GM12878 (cell line): ENCODE measurements at regions of chr5 and their contacts with region 1.

Region 1: DNA sequence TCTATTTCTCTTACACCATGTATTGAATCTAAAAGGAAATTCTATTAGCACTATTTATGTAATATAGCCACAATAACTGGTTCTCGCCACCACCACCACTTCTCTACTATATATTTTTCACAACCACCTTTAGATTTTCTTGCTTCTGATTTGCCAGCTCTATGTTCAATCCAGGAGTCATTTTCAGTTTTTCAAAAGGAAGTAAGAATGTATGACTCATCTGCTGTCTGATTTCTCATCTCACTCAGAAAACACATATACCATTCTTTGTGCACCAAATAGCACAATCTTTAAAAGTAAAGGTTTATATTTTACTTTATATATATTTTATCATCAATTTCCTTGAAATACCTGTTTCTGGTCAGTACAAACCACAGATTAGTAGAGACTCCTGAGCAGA is 1127.5 kb downstream of the TAF11L14 start:
- DNase-seq: no peak
- ATAC-seq: peak; percentile 89
- H3K4me3 ChIP-seq: no peak overlapping the region
- H3K27ac ChIP-seq: no peak overlapping the region
- H3K4me1 ChIP-seq: no peaks in the 10 kb centered on the region
- H3K27me3 ChIP-seq: no peaks in the 10 kb centered on the region
- CTCF ChIP-seq: no peak
- EP300 ChIP-seq: no peak
- POLR2A ChIP-seq: no peak
- RAD21 ChIP-seq: no peak

Region 2: DNA sequence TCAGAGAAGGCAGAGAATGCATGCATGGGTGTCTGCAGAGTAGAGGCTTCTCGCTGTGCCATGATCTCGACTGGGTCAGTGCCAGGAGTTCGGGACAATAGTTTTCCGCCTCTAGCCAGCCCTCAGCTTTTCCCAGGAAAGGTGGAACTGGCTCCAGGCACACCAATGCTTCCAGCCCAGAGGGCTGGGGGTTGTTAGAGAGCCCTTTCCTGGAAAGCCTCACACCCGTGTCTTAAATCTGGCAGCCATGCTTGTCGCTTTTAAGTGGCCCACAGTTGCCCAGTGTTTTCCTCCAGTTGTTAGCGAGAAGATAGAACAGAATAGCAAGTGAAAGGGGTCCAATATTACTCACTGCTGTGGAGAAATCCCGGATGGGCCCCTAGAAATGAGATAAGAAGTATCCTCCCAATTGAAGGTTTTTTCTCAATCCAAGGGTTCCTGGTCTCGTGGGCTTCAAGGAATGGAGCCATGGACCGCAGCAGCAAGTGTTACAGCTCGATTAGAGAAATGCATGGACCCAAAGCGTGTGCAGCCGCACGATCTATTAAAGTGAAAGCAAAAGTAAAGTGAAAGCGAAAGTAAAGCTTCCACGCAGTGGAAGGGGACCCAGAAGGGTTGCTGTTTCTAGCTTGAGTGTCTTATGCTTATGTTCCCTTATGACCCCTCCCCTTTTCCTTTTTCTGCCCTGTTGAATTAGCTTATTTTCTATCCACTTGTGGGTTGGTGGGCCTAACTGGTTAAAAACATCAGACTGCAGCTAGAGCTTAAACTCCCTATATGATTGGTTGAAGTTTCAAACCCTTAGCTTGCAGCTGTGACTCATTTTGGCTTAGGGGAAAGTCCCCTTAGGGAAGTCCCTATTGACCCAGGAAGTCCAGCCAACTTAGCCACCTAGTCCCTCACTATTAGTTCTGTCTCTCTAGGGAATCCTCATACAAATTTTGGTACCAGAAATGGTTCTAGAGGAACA is 15.9 kb before region 1 on chr5:
- CTCF ChIA-PET with region 1: interaction called, 4 read pairs
- POLR2A ChIA-PET with region 1: interaction called, 6 read pairs
- RAD21 ChIA-PET with region 1: interaction called, 4 read pairs
- SMC1A ChIA-PET with region 1: interaction called, 14 read pairs
- in situ Hi-C with region 1: no loop called
- intact Hi-C with region 1: no loop called
- DNase-seq: peak; percentile 89
- ATAC-seq: peak; percentile 75
- H3K4me3 ChIP-seq: peak overlapping the region; percentile 84
- H3K27ac ChIP-seq: peak overlapping the region; percentile 82
- H3K4me1 ChIP-seq: peaks cover 24% of the 10 kb centered on the region
- H3K27me3 ChIP-seq: no peaks in the 10 kb centered on the region
- CTCF ChIP-seq: no peak
- EP300 ChIP-seq: peak in 1 of 2 experiments; percentile 48; a peak in 1 of 4 replicates
- POLR2A ChIP-seq: peak; percentile 49
- RAD21 ChIP-seq: no peak

Region 3: GRCh38 chr5:18892629-18893028 is 130.8 kb after region 1 on chr5:
- CTCF ChIA-PET with region 1: no interaction called
- POLR2A ChIA-PET with region 1: no interaction called
- RAD21 ChIA-PET with region 1: no interaction called
- SMC1A ChIA-PET with region 1: no interaction called
- in situ Hi-C with region 1: no loop called
- intact Hi-C with region 1: no loop called
- DNase-seq: no peak
- ATAC-seq: no peak
- H3K4me3 ChIP-seq: no peak overlapping the region
- H3K27ac ChIP-seq: no peak overlapping the region
- H3K4me1 ChIP-seq: no peaks in the 10 kb centered on the region
- H3K27me3 ChIP-seq: no peaks in the 10 kb centered on the region
- CTCF ChIP-seq: no peak
- EP300 ChIP-seq: no peak
- POLR2A ChIP-seq: no peak
- RAD21 ChIP-seq: no peak